OCI-LY7 (cell line): ENCODE measurements at regions of chr5 and their contacts with region 1.

Region 1: GRCh38 chr5:1167728-1168709 is 33.4 kb upstream of the SLC6A19 start:
- DNase-seq: peak; percentile 85
- H3K4me3 ChIP-seq: peak overlapping the region; percentile 54
- H3K27ac ChIP-seq: no peak overlapping the region
- H3K4me1 ChIP-seq: peaks cover 16% of the 10 kb centered on the region
- CTCF ChIP-seq: peak; percentile 84

Region 2: GRCh38 chr5:923281-923873 is 244.6 kb before region 1 on chr5:
- CTCF ChIA-PET with region 1: interaction called, 4 read pairs
- POLR2A ChIA-PET with region 1: no interaction called
- intact Hi-C with region 1: loop called (anchors 1 kb)
- DNase-seq: peak; percentile 66
- H3K4me3 ChIP-seq: no peak overlapping the region
- H3K27ac ChIP-seq: no peak overlapping the region
- H3K4me1 ChIP-seq: no peaks in the 10 kb centered on the region
- CTCF ChIP-seq: peak; percentile 82

Region 3: GRCh38 chr5:963673-964531 is 204.1 kb before region 1 on chr5:
- CTCF ChIA-PET with region 1: no interaction called
- POLR2A ChIA-PET with region 1: no interaction called
- intact Hi-C with region 1: no loop called
- DNase-seq: no peak
- H3K4me3 ChIP-seq: no peak overlapping the region
- H3K27ac ChIP-seq: no peak overlapping the region
- H3K4me1 ChIP-seq: no peaks in the 10 kb centered on the region
- CTCF ChIP-seq: no peak

Region 4: DNA sequence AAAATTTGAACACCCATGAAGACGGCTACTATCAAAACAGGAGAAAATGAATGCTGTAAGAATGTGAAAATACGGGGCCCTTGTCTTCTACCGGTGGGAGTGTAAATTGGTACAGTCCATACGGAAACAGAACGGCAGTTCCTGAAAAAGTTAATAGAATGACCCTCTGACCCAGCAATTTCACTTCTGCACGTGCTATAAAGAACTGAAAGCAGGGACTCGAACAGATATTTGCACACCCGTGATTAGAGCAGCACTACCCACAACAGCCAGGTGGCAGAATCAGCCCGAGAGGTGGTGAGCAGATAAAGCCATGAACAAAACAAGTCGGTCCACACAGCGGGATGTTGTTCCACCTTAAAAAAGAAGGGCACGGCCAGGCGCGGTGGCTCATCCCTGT is 33.5 kb before region 1 on chr5:
- CTCF ChIA-PET with region 1: interaction called, 5 read pairs
- POLR2A ChIA-PET with region 1: interaction called, 3 read pairs
- intact Hi-C with region 1: loop called (anchors 1 kb)
- DNase-seq: peak; percentile 96
- H3K4me3 ChIP-seq: peak overlapping the region; percentile 27
- H3K27ac ChIP-seq: peak overlapping the region; percentile 70
- H3K4me1 ChIP-seq: peaks cover 54% of the 10 kb centered on the region
- CTCF ChIP-seq: peak; percentile 78

Region 5: GRCh38 chr5:1315709-1316587 is 147.9 kb after region 1 on chr5:
- CTCF ChIA-PET with region 1: no interaction called
- POLR2A ChIA-PET with region 1: interaction called, 3 read pairs
- intact Hi-C with region 1: loop called (anchors 2 kb)
- DNase-seq: peak; percentile 99
- H3K4me3 ChIP-seq: peak overlapping the region; percentile 66
- H3K27ac ChIP-seq: peak overlapping the region; percentile 100
- H3K4me1 ChIP-seq: peaks cover 73% of the 10 kb centered on the region
- CTCF ChIP-seq: no peak

Region 6: GRCh38 chr5:1641560-1642166 is 473.6 kb after region 1 on chr5:
- CTCF ChIA-PET with region 1: interaction called, 3 read pairs
- POLR2A ChIA-PET with region 1: no interaction called
- intact Hi-C with region 1: loop called (anchors 1 kb)
- DNase-seq: peak; percentile 90
- H3K4me3 ChIP-seq: no peak overlapping the region
- H3K27ac ChIP-seq: no peak overlapping the region
- H3K4me1 ChIP-seq: peaks cover 8% of the 10 kb centered on the region
- CTCF ChIP-seq: peak; percentile 100